ENCODE measurements at regions of chr7 and their contacts with region 1.

Region 1: GRCh38 chr7:43647673-43648472 is 65.0 kb downstream of the STK17A start:
- DNase-seq: peak; percentile 85
- ATAC-seq: peak; percentile 55
- H3K4me3 ChIP-seq: peak overlapping the region; percentile 58
- H3K27ac ChIP-seq: peak overlapping the region; percentile 99
- H3K4me1 ChIP-seq: peaks cover 68% of the 10 kb centered on the region
- H3K27me3 ChIP-seq: no peaks in the 10 kb centered on the region
- CTCF ChIP-seq: no peak
- EP300 ChIP-seq: peak in 1 of 2 experiments; percentile 40; a peak in 2 of 4 replicates
- POLR2A ChIP-seq: peak; percentile 48
- RAD21 ChIP-seq: no peak

Region 2: GRCh38 chr7:43590862-43591550 is 56.9 kb before region 1 on chr7:
- CTCF ChIA-PET with region 1: interaction called, 183 read pairs
- POLR2A ChIA-PET with region 1: interaction called, 138 read pairs
- RAD21 ChIA-PET with region 1: interaction called, 280 read pairs
- SMC1A ChIA-PET with region 1: interaction called, 163 read pairs
- in situ Hi-C with region 1: no loop called
- intact Hi-C with region 1: loop called (anchors 1 kb)
- DNase-seq: peak; percentile 87
- ATAC-seq: peak; percentile 65
- H3K4me3 ChIP-seq: peak overlapping the region; percentile 71
- H3K27ac ChIP-seq: peak overlapping the region; percentile 98
- H3K4me1 ChIP-seq: peaks cover 42% of the 10 kb centered on the region
- H3K27me3 ChIP-seq: no peaks in the 10 kb centered on the region
- CTCF ChIP-seq: no peak
- EP300 ChIP-seq: peak; percentile 87 to 99
- POLR2A ChIP-seq: no peak; the same call in 1 of the 2 replicates
- RAD21 ChIP-seq: 0 out of 2 replicates have a peak, but pooled peaks have one; percentile 13

Region 3: DNA sequence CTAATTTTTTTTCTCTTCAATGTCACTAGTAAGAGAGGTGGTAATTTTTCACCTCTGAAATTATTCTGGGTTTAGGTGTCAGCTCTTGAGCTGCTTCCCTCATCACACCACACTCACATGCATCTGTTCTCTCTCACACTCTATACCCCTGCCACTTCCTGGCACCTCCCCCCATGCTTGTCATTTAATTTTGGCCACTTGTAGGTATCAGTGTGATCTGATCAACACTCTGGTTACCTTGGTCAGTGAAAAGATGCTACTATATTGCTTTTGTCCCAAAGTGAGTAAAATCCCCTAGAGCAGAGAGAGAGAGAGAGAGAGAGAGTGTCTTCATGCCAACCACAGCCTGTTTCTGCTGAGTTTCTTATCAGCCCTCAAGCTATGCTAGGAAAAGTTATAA is 22.4 kb before region 1 on chr7:
- CTCF ChIA-PET with region 1: interaction called, 8 read pairs
- POLR2A ChIA-PET with region 1: interaction called, 8 read pairs
- RAD21 ChIA-PET with region 1: interaction called, 13 read pairs
- SMC1A ChIA-PET with region 1: interaction called, 146 read pairs
- in situ Hi-C with region 1: no loop called
- intact Hi-C with region 1: no loop called
- DNase-seq: no peak
- ATAC-seq: peak; percentile 88
- H3K4me3 ChIP-seq: no peak overlapping the region
- H3K27ac ChIP-seq: peak overlapping the region; percentile 25; the same call in 1 of the 2 replicates
- H3K4me1 ChIP-seq: peaks cover 28% of the 10 kb centered on the region
- H3K27me3 ChIP-seq: no peaks in the 10 kb centered on the region
- CTCF ChIP-seq: no peak
- EP300 ChIP-seq: peak; percentile 8 to 67; a peak in 3 of 4 replicates
- POLR2A ChIP-seq: no peak
- RAD21 ChIP-seq: no peak

Region 4: GRCh38 chr7:43679210-43680068 is 31.6 kb after region 1 on chr7:
- CTCF ChIA-PET with region 1: no interaction called
- POLR2A ChIA-PET with region 1: no interaction called
- RAD21 ChIA-PET with region 1: interaction called, 13 read pairs
- SMC1A ChIA-PET with region 1: interaction called, 4 read pairs
- in situ Hi-C with region 1: no loop called
- intact Hi-C with region 1: loop called (anchors 2 kb)
- DNase-seq: peak; percentile 48
- ATAC-seq: peak; percentile 71
- H3K4me3 ChIP-seq: no peak overlapping the region
- H3K27ac ChIP-seq: peak overlapping the region; percentile 80
- H3K4me1 ChIP-seq: peaks cover 11% of the 10 kb centered on the region
- H3K27me3 ChIP-seq: no peaks in the 10 kb centered on the region
- CTCF ChIP-seq: no peak
- EP300 ChIP-seq: no peak
- POLR2A ChIP-seq: no peak
- RAD21 ChIP-seq: no peak

Region 5: DNA sequence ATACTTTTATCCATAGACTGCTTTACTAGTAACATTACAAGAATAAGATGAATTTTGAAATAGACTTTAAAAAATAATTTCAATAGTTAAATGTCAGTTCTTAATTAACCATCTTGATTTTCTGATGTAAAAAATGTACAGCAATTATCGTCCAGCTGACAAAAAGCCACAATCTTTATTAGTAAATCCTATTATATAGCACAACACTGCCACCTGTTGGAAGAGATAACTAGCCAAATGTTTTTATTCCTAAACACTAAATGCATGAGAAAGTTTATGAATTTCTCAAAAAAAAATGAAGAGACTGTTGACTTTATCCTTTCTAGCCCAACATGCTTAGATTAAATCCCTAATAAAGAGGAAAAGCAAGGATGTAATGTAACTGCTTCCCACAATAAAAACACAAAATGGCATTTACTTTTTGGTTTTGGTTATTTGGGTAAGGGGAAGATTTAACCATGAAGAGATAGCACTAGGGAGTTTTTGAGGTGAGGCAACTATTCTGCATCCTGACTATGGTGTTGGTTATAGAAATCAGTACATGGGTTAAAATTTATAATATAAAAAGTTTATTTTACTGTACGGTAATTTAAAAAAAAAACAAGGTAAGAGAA is 73.4 kb after region 1 on chr7:
- CTCF ChIA-PET with region 1: interaction called, 5 read pairs
- POLR2A ChIA-PET with region 1: interaction called, 3 read pairs
- RAD21 ChIA-PET with region 1: interaction called, 18 read pairs
- SMC1A ChIA-PET with region 1: interaction called, 6 read pairs
- in situ Hi-C with region 1: no loop called
- intact Hi-C with region 1: no loop called
- DNase-seq: no peak
- ATAC-seq: peak; percentile 52
- H3K4me3 ChIP-seq: no peak overlapping the region
- H3K27ac ChIP-seq: no peak overlapping the region
- H3K4me1 ChIP-seq: no peaks in the 10 kb centered on the region
- H3K27me3 ChIP-seq: no peaks in the 10 kb centered on the region
- CTCF ChIP-seq: peak; percentile 40 to 64 (median 44); a peak in 5 of 6 replicates
- EP300 ChIP-seq: no peak
- POLR2A ChIP-seq: no peak
- RAD21 ChIP-seq: peak; percentile 68

Measured in GM12878 (cell line).